Naive thymus-derived CD4-positive, alpha-beta T cell (primary cell): ENCODE measurements at regions of chr4 and their contacts with region 1.

Region 1: DNA sequence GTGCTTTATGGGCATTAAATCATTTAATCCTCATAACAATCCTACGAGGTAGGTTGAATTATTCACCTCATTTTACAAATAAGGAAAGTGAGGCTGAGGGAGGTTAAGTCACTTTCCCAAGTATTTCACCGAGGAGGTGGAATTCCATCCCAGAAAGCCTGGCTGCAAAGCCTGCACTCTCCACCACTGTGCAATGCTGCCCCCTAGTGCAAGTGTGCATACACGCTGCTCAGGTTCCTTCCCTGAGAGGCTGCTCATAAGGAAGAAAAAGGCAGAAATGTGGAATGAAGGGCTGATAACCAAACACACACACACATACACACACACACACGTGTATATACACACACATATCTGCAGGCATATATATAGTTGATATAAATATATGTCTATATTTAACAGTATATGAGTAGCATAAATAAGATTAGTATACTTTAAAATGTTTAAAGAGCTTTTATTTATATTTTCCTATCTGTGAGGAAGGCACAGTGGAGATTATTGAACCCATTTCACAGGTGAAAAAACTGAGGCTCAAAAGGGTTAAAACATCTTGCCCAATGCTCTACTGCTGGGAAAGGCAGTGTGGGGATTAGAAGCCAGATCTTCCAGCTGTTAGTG is 714.5 kb upstream of the TENM3 start:
- DNase-seq: peak in 1 of 9 donors; percentile 23
- ATAC-seq: peak; percentile 36
- H3K4me3 ChIP-seq: no peak overlapping the region
- H3K4me3 Mint-ChIP-seq: no peak overlapping the region
- H3K27ac ChIP-seq: no peak overlapping the region
- H3K27ac Mint-ChIP-seq: no peak overlapping the region
- H3K4me1 ChIP-seq: no peaks in the 10 kb centered on the region
- H3K4me1 Mint-ChIP-seq: no peaks in the 10 kb centered on the region
- H3K27me3 ChIP-seq: no peaks in the 10 kb centered on the region
- H3K27me3 Mint-ChIP-seq: peaks cover 0 to 3% (median 0%) of the 10 kb centered on the region in 5 donors

Region 2: GRCh38 chr4:180751009-180751408 is 777.7 kb before region 1 on chr4:
- CTCF ChIA-PET with region 1: no interaction called
- POLR2A ChIA-PET with region 1: no interaction called
- intact Hi-C with region 1: no loop called
- DNase-seq: no peak
- ATAC-seq: no peak
- H3K4me3 ChIP-seq: no peak overlapping the region
- H3K4me3 Mint-ChIP-seq: no peak overlapping the region
- H3K27ac ChIP-seq: no peak overlapping the region
- H3K27ac Mint-ChIP-seq: no peak overlapping the region
- H3K4me1 ChIP-seq: no peaks in the 10 kb centered on the region
- H3K4me1 Mint-ChIP-seq: no peaks in the 10 kb centered on the region
- H3K27me3 ChIP-seq: no peaks in the 10 kb centered on the region
- H3K27me3 Mint-ChIP-seq: peaks cover 0 to 4% (median 0%) of the 10 kb centered on the region in 5 donors

Region 3: DNA sequence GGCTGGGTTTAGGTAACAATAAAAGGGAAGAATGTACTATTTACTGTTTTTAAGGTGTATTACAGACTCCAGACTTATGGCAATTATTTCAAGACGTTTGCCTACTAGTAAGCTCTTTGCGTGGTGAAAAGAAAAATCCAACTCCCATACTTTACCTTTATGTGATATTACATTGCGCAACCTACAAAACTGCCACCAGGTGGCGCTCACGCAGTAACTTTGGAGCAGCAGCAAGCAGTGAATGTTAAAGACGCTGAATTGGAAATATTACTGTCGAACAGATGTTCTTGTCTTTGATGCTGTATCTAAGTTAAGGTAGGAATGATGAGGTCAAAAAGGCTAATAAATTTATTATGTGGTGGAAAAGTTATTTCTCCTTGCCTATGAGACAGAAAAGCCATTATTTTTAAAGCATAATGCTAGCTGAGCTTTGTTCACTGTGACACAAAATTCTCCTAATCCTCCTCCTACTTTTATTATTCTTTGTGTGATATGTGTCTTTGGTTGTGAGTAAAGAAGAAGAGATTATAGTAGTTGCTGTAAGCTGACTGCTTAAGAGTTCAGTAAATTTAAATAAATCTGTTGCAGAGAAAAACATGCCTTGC is 385.3 kb before region 1 on chr4:
- CTCF ChIA-PET with region 1: interaction called, 4 read pairs
- POLR2A ChIA-PET with region 1: no interaction called
- intact Hi-C with region 1: loop called in 1 of 2 experiments (anchors 1 kb)
- DNase-seq: peak; percentile 7 to 57 (median 41)
- ATAC-seq: peak; percentile 49
- H3K4me3 ChIP-seq: no peak overlapping the region
- H3K4me3 Mint-ChIP-seq: no peak overlapping the region
- H3K27ac ChIP-seq: no peak overlapping the region
- H3K27ac Mint-ChIP-seq: no peak overlapping the region
- H3K4me1 ChIP-seq: no peaks in the 10 kb centered on the region
- H3K4me1 Mint-ChIP-seq: no peaks in the 10 kb centered on the region
- H3K27me3 ChIP-seq: no peaks in the 10 kb centered on the region
- H3K27me3 Mint-ChIP-seq: peaks cover 0 to 8% (median 0%) of the 10 kb centered on the region in 5 donors

Region 4: GRCh38 chr4:181301735-181302710 is 226.7 kb before region 1 on chr4:
- CTCF ChIA-PET with region 1: no interaction called
- POLR2A ChIA-PET with region 1: no interaction called
- intact Hi-C with region 1: loop called in 1 of 2 experiments (anchors 5 kb)
- DNase-seq: no peak
- ATAC-seq: no peak
- H3K4me3 ChIP-seq: no peak overlapping the region
- H3K4me3 Mint-ChIP-seq: no peak overlapping the region
- H3K27ac ChIP-seq: no peak overlapping the region
- H3K27ac Mint-ChIP-seq: peak overlapping the region in 1 of 9 donors; percentile 25
- H3K4me1 ChIP-seq: no peaks in the 10 kb centered on the region
- H3K4me1 Mint-ChIP-seq: no peaks in the 10 kb centered on the region
- H3K27me3 ChIP-seq: no peaks in the 10 kb centered on the region
- H3K27me3 Mint-ChIP-seq: no peaks in the 10 kb centered on the region

Region 5: DNA sequence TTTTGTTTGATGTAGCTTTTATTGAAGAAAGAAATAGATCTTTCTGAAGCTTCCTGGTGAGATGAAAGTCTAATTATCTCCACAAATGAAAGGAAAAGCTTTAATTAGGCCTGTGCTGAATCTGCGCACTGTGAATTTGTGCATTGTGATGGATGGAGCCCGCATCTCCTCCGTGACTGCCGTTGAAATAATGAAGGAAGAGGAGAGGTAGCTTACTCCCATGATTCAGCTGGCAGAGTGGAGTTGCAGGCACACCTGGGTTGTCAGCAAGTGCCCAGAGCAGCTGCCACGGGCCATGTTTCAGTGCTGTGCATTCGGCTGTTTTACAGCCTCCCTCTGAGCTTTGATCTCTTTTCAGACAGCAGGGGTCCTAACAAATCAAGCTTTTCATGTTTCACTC is 20.7 kb before region 1 on chr4:
- CTCF ChIA-PET with region 1: no interaction called
- POLR2A ChIA-PET with region 1: no interaction called
- intact Hi-C with region 1: no loop called
- DNase-seq: no peak
- ATAC-seq: no peak
- H3K4me3 ChIP-seq: no peak overlapping the region
- H3K4me3 Mint-ChIP-seq: no peak overlapping the region
- H3K27ac ChIP-seq: no peak overlapping the region
- H3K27ac Mint-ChIP-seq: no peak overlapping the region
- H3K4me1 ChIP-seq: no peaks in the 10 kb centered on the region
- H3K4me1 Mint-ChIP-seq: no peaks in the 10 kb centered on the region
- H3K27me3 ChIP-seq: no peaks in the 10 kb centered on the region
- H3K27me3 Mint-ChIP-seq: no peaks in the 10 kb centered on the region

Region 6: GRCh38 chr4:181548873-181549575 is 20.3 kb after region 1 on chr4:
- CTCF ChIA-PET with region 1: no interaction called
- POLR2A ChIA-PET with region 1: no interaction called
- intact Hi-C with region 1: no loop called
- DNase-seq: no peak
- ATAC-seq: no peak
- H3K4me3 ChIP-seq: no peak overlapping the region
- H3K4me3 Mint-ChIP-seq: no peak overlapping the region
- H3K27ac ChIP-seq: no peak overlapping the region
- H3K27ac Mint-ChIP-seq: no peak overlapping the region
- H3K4me1 ChIP-seq: no peaks in the 10 kb centered on the region
- H3K4me1 Mint-ChIP-seq: no peaks in the 10 kb centered on the region
- H3K27me3 ChIP-seq: no peaks in the 10 kb centered on the region
- H3K27me3 Mint-ChIP-seq: no peaks in the 10 kb centered on the region

Region 7: DNA sequence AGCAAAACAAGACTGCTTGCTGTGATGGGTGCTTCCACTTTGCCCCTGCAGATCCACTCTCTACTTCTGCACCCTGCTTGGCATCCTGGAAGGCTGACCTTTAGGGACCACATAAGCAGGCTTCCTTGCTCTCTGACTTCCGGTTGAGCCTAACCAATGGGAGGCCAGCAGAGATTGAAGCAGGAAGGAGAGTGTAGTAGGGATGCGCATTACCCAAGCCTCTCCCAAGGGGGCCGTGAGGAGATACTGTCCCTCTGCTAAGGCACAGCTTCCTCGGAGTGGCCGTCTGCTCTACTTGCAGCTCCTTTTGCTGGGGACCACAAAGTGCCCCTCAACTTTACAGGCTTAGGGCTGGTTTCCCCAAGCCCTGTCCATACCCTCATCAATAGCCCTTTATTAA is 90.2 kb after region 1 on chr4:
- CTCF ChIA-PET with region 1: no interaction called
- POLR2A ChIA-PET with region 1: no interaction called
- intact Hi-C with region 1: no loop called
- DNase-seq: no peak
- ATAC-seq: no peak
- H3K4me3 ChIP-seq: no peak overlapping the region
- H3K4me3 Mint-ChIP-seq: no peak overlapping the region
- H3K27ac ChIP-seq: no peak overlapping the region
- H3K27ac Mint-ChIP-seq: no peak overlapping the region
- H3K4me1 ChIP-seq: no peaks in the 10 kb centered on the region
- H3K4me1 Mint-ChIP-seq: no peaks in the 10 kb centered on the region
- H3K27me3 ChIP-seq: no peaks in the 10 kb centered on the region
- H3K27me3 Mint-ChIP-seq: peaks cover 0 to 4% (median 0%) of the 10 kb centered on the region in 5 donors